Activated CD4-positive, alpha-beta memory T cell treated with anti-CD3 and anti-CD28 coated beads for 36 hours (primary cell): ENCODE measurements at regions of chr4 and their contacts with region 1.

Region 1: GRCh38 chr4:100093091-100093866 is 97.0 kb downstream of the DDIT4L start:
- DNase-seq: peak; percentile 93
- H3K4me3 Mint-ChIP-seq: no peak overlapping the region
- H3K27ac Mint-ChIP-seq: peak overlapping the region; percentile 36
- H3K4me1 Mint-ChIP-seq: peaks cover 39% of the 10 kb centered on the region
- H3K27me3 Mint-ChIP-seq: no peaks in the 10 kb centered on the region

Region 2: DNA sequence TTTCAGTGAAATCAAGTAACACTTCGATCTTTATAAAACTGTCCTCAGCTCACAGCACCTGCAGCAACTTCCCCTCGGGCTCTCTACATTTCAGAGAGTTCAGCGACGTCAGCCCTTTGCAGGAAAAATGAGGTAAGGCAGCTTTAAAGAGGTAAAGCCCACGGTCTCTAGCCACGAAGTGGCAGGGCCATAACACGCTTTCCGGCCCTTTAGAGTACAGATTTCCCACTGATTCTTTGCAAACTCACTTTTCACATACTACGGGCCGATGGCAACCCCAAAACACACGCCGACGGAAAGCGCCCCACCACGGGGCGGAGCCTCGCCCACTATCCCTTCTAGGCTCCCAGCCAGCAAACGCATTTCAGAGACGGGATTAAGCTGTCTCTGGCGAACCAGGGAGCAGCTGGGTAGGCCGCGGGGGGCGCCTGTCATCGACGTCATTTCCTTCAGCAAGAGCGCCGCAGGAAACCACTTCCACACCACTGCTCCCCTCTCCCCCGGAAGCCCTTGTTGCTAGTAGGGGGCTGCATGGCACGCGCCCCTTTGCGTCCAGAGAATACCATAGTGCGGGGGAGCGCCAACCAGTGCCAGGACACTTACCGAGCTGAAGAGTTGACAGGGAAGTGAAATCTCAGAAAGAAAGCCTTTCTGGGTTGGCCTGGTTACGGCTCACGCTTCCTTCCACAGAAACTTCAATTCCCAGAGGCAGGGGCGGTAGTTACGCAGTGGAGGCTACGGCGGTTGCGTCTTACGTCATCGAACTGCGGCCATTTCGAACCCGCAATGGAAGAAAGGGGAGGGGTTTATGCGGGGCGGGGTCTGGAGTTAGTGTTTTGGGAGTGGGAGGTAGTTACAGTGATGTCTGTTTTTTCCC is 529.7 kb before region 1 on chr4 and contains the start of gene TRMT10A:
- CTCF ChIA-PET with region 1: interaction called, 4 read pairs
- POLR2A ChIA-PET with region 1: no interaction called
- intact Hi-C with region 1: loop called (anchors 1 kb)
- DNase-seq: peak; percentile 98
- H3K4me3 Mint-ChIP-seq: peak within 1 kb of the TSS; percentile 93
- H3K27ac Mint-ChIP-seq: peak within 1 kb of the TSS; percentile 98
- H3K4me1 Mint-ChIP-seq: peaks cover 6% of the 10 kb centered on the region
- H3K27me3 Mint-ChIP-seq: peaks cover 7% of the 10 kb centered on the region
- total RNA-seq, gene TRMT10A: 5.6 to 8.9 TPM

Region 3: GRCh38 chr4:99855678-99856077 is 237.6 kb before region 1 on chr4:
- CTCF ChIA-PET with region 1: no interaction called
- POLR2A ChIA-PET with region 1: no interaction called
- intact Hi-C with region 1: no loop called
- DNase-seq: peak; percentile 37
- H3K4me3 Mint-ChIP-seq: no peak overlapping the region
- H3K27ac Mint-ChIP-seq: peak overlapping the region; percentile 7
- H3K4me1 Mint-ChIP-seq: peaks cover 70% of the 10 kb centered on the region
- H3K27me3 Mint-ChIP-seq: no peaks in the 10 kb centered on the region

Region 4: GRCh38 chr4:100082852-100083251 is 10.4 kb before region 1 on chr4:
- CTCF ChIA-PET with region 1: interaction called, 73 read pairs
- POLR2A ChIA-PET with region 1: interaction called, 11 read pairs
- intact Hi-C with region 1: loop called (anchors 1 kb)
- DNase-seq: no peak
- H3K4me3 Mint-ChIP-seq: no peak overlapping the region
- H3K27ac Mint-ChIP-seq: peak overlapping the region; percentile 64
- H3K4me1 Mint-ChIP-seq: peaks cover 37% of the 10 kb centered on the region
- H3K27me3 Mint-ChIP-seq: peaks cover 7% of the 10 kb centered on the region

Region 5: DNA sequence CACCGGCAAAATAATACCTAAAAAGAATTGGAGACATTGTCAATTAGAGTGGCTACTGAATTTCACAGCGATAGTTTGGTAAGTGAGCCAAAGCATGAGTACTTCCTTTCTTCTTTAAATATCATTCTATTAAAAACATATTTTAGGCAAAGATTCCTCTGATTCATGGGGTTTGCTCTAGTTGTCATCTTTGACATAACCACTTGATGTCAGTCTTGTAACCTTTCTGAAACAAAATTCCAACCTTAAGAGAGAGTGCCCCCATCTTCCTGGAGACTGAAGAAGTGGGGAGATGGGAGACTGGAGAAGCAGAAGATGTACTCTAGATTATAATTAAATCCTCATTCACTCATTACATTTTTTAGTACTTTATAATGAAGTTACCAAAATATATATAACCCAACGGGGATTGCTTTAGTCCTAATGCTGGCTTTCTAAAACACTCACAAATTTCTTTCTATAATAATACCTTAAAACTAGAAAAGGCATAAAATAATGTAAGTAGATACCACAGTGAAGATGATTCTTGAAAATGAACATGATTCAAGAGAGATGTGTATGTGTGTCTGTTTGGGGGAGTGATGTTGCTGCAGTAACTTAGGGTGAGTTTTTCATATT is 328.2 kb after region 1 on chr4:
- CTCF ChIA-PET with region 1: no interaction called
- POLR2A ChIA-PET with region 1: no interaction called
- intact Hi-C with region 1: loop called (anchors 10 kb)
- DNase-seq: no peak
- H3K4me3 Mint-ChIP-seq: no peak overlapping the region
- H3K27ac Mint-ChIP-seq: no peak overlapping the region
- H3K4me1 Mint-ChIP-seq: no peaks in the 10 kb centered on the region
- H3K27me3 Mint-ChIP-seq: peaks cover 1% of the 10 kb centered on the region

Region 6: GRCh38 chr4:101020956-101021355 is 927.7 kb after region 1 on chr4:
- CTCF ChIA-PET with region 1: interaction called, 3 read pairs
- POLR2A ChIA-PET with region 1: no interaction called
- intact Hi-C with region 1: loop called (anchors 5 kb)
- DNase-seq: peak; percentile 13
- H3K4me3 Mint-ChIP-seq: peak overlapping the region; percentile 12
- H3K27ac Mint-ChIP-seq: peak overlapping the region; percentile 50
- H3K4me1 Mint-ChIP-seq: peaks cover 58% of the 10 kb centered on the region
- H3K27me3 Mint-ChIP-seq: no peaks in the 10 kb centered on the region

Region 7: GRCh38 chr4:101328063-101328602 is 1234.9 kb after region 1 on chr4:
- CTCF ChIA-PET with region 1: no interaction called
- POLR2A ChIA-PET with region 1: no interaction called
- intact Hi-C with region 1: loop called (anchors 5 kb)
- DNase-seq: peak; percentile 37
- H3K4me3 Mint-ChIP-seq: peak overlapping the region; percentile 63
- H3K27ac Mint-ChIP-seq: peak overlapping the region; percentile 65
- H3K4me1 Mint-ChIP-seq: peaks cover 48% of the 10 kb centered on the region
- H3K27me3 Mint-ChIP-seq: peaks cover 2% of the 10 kb centered on the region

Region 8: GRCh38 chr4:101730291-101731117 is 1637.2 kb after region 1 on chr4:
- CTCF ChIA-PET with region 1: interaction called, 28 read pairs
- POLR2A ChIA-PET with region 1: interaction called, 3 read pairs
- intact Hi-C with region 1: loop called (anchors 1 kb)
- DNase-seq: peak; percentile 68
- H3K4me3 Mint-ChIP-seq: no peak overlapping the region
- H3K27ac Mint-ChIP-seq: no peak overlapping the region
- H3K4me1 Mint-ChIP-seq: no peaks in the 10 kb centered on the region
- H3K27me3 Mint-ChIP-seq: peaks cover 6% of the 10 kb centered on the region